Endothelial cell of umbilical vein (primary cell): ENCODE measurements at regions of chr10 and their contacts with region 1.

Region 1: GRCh38 chr10:51129946-51130544 is 55.8 kb downstream of the PRKG1 start:
- DNase-seq: no peak
- H3K4me3 ChIP-seq: no peak overlapping the region
- H3K27ac ChIP-seq: no peak overlapping the region
- H3K4me1 ChIP-seq: no peaks in the 10 kb centered on the region
- H3K27me3 ChIP-seq: no peaks in the 10 kb centered on the region
- CTCF ChIP-seq: no peak
- POLR2A ChIP-seq: no peak

Region 2: GRCh38 chr10:51092402-51092801 is 37.6 kb before region 1 on chr10:
- CTCF ChIA-PET with region 1: no interaction called
- POLR2A ChIA-PET with region 1: no interaction called
- dilution Hi-C with region 1: no loop called
- intact Hi-C with region 1: loop called (anchors 1 kb)
- DNase-seq: no peak
- H3K4me3 ChIP-seq: no peak overlapping the region
- H3K27ac ChIP-seq: no peak overlapping the region
- H3K4me1 ChIP-seq: no peaks in the 10 kb centered on the region
- H3K27me3 ChIP-seq: peaks cover 5 to 8% of the 10 kb centered on the region in 2 experiments
- CTCF ChIP-seq: no peak
- POLR2A ChIP-seq: no peak

Region 3: GRCh38 chr10:51141010-51141409 is 11.0 kb after region 1 on chr10:
- CTCF ChIA-PET with region 1: no interaction called
- POLR2A ChIA-PET with region 1: no interaction called
- dilution Hi-C with region 1: no loop called
- intact Hi-C with region 1: no loop called
- DNase-seq: no peak
- H3K4me3 ChIP-seq: no peak overlapping the region
- H3K27ac ChIP-seq: no peak overlapping the region
- H3K4me1 ChIP-seq: no peaks in the 10 kb centered on the region
- H3K27me3 ChIP-seq: no peaks in the 10 kb centered on the region
- CTCF ChIP-seq: no peak
- POLR2A ChIP-seq: no peak